Activated CD4-positive, alpha-beta memory T cell treated with anti-CD3 and anti-CD28 coated beads for 36 hours (primary cell): ENCODE measurements at regions of chr5 and their contacts with region 1.

Region 1: DNA sequence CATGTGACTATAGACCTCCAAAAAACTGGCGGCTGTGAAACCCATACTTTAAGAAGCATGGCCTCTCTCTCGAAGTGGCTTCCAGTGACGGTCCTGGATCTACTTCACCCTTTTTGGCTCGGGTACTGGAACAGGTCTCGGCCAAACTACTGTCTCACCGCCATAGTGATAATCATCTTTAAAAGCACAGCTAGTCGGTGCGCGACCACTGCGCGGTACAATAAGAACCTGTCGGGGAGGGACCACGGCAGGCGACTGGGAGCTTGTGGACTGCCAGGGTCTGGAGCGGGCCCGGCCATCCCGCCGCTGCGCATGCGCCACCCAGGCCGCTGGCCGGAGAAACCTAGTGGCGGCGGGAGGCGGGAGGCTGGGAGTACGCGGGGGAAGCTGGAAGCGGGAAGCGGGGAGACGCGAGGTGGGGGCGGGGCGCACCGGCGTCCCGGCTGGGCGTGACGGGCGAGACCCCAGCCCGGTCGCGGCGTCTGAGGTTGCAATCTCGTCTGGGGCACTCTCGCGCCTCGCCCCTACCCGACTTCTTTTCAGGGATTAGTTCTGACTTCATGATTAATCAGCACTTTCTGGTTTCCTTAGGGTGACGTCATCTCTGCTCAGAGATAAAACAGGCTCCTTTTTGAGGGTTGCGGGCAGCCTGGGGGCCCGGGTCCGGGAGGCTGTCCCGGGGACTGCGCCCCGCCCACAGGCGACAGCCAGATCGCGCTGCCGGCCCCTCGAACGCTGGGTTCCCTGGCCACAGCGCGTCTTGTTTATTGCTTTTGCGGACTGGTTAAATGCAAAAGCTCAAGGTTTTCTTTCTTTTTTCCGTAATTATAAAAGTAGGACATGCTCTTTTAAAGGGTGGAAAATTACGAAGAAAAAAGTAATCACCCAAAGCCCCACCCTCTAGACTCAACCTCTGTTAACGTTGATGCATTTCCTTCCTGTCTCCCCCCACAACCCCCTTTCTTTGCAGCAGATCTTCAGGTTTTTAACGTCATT is 266.8 kb downstream of the CWC27 start:
- DNase-seq: peak; percentile 87
- H3K4me3 Mint-ChIP-seq: peak overlapping the region; percentile 72
- H3K27ac Mint-ChIP-seq: peak overlapping the region; percentile 89
- H3K4me1 Mint-ChIP-seq: peaks cover 31% of the 10 kb centered on the region
- H3K27me3 Mint-ChIP-seq: no peaks in the 10 kb centered on the region

Region 2: DNA sequence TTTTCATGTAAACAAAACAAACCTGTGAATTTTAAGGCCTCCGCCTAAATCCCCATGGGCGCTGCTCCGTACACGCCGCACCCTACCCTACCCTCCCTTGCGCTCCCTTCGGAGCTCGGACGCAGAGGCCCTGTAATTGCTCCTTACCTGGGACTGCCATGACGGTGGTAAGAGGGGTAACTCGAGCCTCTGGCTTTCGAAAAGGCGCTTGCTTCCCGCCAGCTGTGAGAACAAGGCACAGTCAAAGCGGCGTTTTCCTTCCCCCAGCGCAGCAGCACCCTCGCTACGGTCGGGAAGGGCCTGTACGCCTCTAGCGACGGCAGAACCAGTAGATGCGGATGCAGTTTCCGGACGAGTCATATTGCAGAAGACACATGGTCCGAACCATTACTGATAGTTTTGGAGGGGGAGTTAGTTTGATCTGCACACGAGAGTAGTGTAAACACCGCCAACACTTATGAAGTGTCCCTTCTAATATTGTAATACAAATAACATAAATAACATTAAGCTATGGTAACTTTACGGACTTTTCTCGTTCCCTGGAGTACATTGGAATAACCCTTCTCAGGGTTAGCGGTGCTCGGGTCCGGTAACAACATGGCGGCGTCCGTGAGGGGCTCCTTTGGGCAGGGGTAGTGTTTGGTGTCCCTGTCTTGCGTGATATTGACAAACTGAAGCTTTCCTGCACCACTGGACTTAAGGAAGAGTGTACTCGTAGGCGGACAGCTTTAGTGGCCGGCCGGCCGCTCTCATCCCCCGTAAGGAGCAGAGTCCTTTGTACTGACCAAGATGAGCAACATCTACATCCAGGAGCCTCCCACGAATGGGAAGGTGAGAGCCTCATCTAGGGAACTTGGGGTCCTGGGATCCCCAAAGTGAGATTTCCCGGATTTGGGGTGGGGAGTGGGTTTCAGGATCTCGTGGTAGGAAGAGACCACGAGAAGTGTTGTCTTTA is 266.9 kb before region 1 on chr5 and contains the starts of genes CWC27 and SREK1IP1:
- CTCF ChIA-PET with region 1: no interaction called
- POLR2A ChIA-PET with region 1: interaction called, 3 read pairs
- intact Hi-C with region 1: loop called (anchors 5 kb)
- DNase-seq: peak; percentile 89
- H3K4me3 Mint-ChIP-seq: peak within 1 kb of the TSS; percentile 100
- H3K27ac Mint-ChIP-seq: peak within 1 kb of the TSS; percentile 94
- H3K4me1 Mint-ChIP-seq: peaks cover 43% of the 10 kb centered on the region
- H3K27me3 Mint-ChIP-seq: no peaks in the 10 kb centered on the region
- total RNA-seq, gene CWC27: 31.4 to 33.7 TPM
- total RNA-seq, gene SREK1IP1: 20.2 to 24.3 TPM

Region 3: DNA sequence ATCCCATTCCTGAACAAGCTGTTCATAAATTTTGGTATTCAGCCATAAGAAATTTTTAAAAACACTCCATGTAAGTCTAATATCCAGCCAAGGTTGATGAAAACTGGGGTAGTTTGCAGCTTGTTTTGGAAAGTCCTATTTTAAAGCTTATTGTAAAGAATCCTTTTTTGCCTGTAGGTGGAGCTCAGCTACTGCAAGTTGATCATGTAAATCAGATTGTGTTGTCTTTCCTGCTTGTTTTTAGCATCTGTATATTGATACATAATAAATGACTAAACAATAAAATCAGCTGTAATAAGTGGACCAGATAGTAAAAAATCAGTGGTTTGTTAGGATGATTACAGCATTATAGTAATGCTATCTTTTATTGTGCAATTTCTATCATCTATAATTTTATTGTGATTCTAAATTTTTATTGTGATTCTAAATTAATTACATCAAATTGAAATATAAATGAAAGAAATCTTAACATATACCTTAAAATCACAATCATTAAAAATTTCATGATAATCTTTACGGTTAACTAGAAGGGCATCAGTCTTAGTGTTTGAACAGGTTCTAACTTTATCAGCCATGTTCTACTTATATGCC is 224.4 kb before region 1 on chr5:
- CTCF ChIA-PET with region 1: interaction called, 3 read pairs
- POLR2A ChIA-PET with region 1: no interaction called
- intact Hi-C with region 1: loop called (anchors 5 kb)
- DNase-seq: no peak
- H3K4me3 Mint-ChIP-seq: no peak overlapping the region
- H3K27ac Mint-ChIP-seq: no peak overlapping the region
- H3K4me1 Mint-ChIP-seq: peaks cover 6% of the 10 kb centered on the region
- H3K27me3 Mint-ChIP-seq: no peaks in the 10 kb centered on the region

Region 4: GRCh38 chr5:65021527-65022226 is 13.8 kb before region 1 on chr5:
- CTCF ChIA-PET with region 1: no interaction called
- POLR2A ChIA-PET with region 1: no interaction called
- intact Hi-C with region 1: loop called (anchors 2 kb)
- DNase-seq: no peak
- H3K4me3 Mint-ChIP-seq: no peak overlapping the region
- H3K27ac Mint-ChIP-seq: no peak overlapping the region
- H3K4me1 Mint-ChIP-seq: peaks cover 11% of the 10 kb centered on the region
- H3K27me3 Mint-ChIP-seq: no peaks in the 10 kb centered on the region

Region 5: GRCh38 chr5:65102828-65103711 is 67.6 kb after region 1 on chr5:
- CTCF ChIA-PET with region 1: interaction called, 5 read pairs
- POLR2A ChIA-PET with region 1: interaction called, 3 read pairs
- intact Hi-C with region 1: loop called (anchors 1 kb)
- DNase-seq: peak; percentile 45
- H3K4me3 Mint-ChIP-seq: peak overlapping the region; percentile 70
- H3K27ac Mint-ChIP-seq: peak overlapping the region; percentile 62
- H3K4me1 Mint-ChIP-seq: peaks cover 31% of the 10 kb centered on the region
- H3K27me3 Mint-ChIP-seq: no peaks in the 10 kb centered on the region

Region 6: DNA sequence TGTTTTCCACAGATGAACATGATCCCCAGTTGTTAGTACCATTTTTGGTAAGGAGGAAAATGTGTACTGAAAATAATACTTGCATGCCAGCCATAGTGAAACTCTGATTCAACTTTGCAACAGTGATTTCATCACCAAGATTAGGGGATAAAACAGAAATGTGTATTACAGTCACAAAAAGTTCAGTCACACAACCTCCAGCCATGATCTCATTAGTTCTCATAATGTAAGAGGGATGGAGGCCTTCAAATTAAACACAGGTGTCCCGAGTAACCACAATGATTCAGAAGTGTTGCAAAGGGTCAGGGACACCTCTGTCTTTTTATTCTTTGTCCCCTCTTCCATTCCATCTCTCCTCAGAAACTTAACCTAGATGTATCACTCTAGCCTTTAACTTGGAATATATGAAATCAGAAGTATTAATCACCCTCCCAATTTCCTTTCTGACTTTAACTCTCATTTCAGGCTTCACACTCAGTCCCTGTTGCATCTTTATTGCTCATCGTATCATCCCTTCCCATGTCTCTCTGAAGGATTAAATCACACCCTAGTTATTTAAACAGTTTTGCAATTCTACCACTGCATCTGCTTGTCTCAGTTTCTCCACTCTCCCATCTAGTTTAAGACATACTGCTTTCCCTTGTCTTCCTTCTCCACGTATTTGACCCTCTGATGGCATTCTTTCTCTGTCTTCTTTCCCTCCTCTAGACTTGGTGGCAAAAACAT is 155.0 kb after region 1 on chr5:
- CTCF ChIA-PET with region 1: no interaction called
- POLR2A ChIA-PET with region 1: no interaction called
- intact Hi-C with region 1: loop called (anchors 1 kb)
- DNase-seq: no peak
- H3K4me3 Mint-ChIP-seq: no peak overlapping the region
- H3K27ac Mint-ChIP-seq: no peak overlapping the region
- H3K4me1 Mint-ChIP-seq: peaks cover 15% of the 10 kb centered on the region
- H3K27me3 Mint-ChIP-seq: peaks cover 5% of the 10 kb centered on the region

Region 7: GRCh38 chr5:65562731-65563701 is 527.5 kb after region 1 on chr5 and contains the starts of genes CENPK and PPWD1:
- CTCF ChIA-PET with region 1: no interaction called
- POLR2A ChIA-PET with region 1: interaction called, 3 read pairs
- intact Hi-C with region 1: loop called (anchors 5 kb)
- DNase-seq: peak; percentile 98
- H3K4me3 Mint-ChIP-seq: peak within 1 kb of the TSS; percentile 92
- H3K27ac Mint-ChIP-seq: peak within 1 kb of the TSS; percentile 93
- H3K4me1 Mint-ChIP-seq: peaks cover 45% of the 10 kb centered on the region
- H3K27me3 Mint-ChIP-seq: no peaks in the 10 kb centered on the region
- total RNA-seq, gene CENPK: 79.7 to 87.5 TPM
- total RNA-seq, gene PPWD1: 38.0 to 42.2 TPM